ENCODE measurements at regions of chr9 and their contacts with region 1.

Region 1: GRCh38 chr9:120792898-120793765 is at the start of gene FBXW2:
- DNase-seq: peak; percentile 87
- ATAC-seq: peak; percentile 98
- H3K4me3 ChIP-seq: peak within 1 kb of the TSS; percentile 81 to 87 (median 84)
- H3K27ac ChIP-seq: peak within 1 kb of the TSS; percentile 90
- H3K4me1 ChIP-seq: peaks cover 53% of the 10 kb centered on the region
- H3K27me3 ChIP-seq: no peaks in the 10 kb centered on the region; a peak in 1 of 5 replicates
- CTCF ChIP-seq: peak; percentile 23; the same call in 1 of the 2 replicates
- EP300 ChIP-seq: no peak
- POLR2A ChIP-seq: peak; percentile 95 to 97
- RAD21 ChIP-seq: peak; percentile 63
- total RNA-seq, gene FBXW2: 43.1 and 55.2 TPM in 2 replicates

Region 2: GRCh38 chr9:120842690-120843499 is 49.8 kb after region 1 on chr9 and contains the start of gene PSMD5:
- CTCF ChIA-PET with region 1: no interaction called
- POLR2A ChIA-PET with region 1: interaction called, 12 read pairs
- in situ Hi-C with region 1: no loop called
- intact Hi-C with region 1: no loop called
- DNase-seq: peak; percentile 94
- ATAC-seq: peak; percentile 96
- H3K4me3 ChIP-seq: peak within 1 kb of the TSS; percentile 73 to 91 (median 87)
- H3K27ac ChIP-seq: peak within 1 kb of the TSS; percentile 82
- H3K4me1 ChIP-seq: peaks cover 30% of the 10 kb centered on the region
- H3K27me3 ChIP-seq: peaks cover 0 to 3% of the 10 kb centered on the region in 2 experiments; a peak in 1 of 5 replicates
- CTCF ChIP-seq: peak; percentile 48
- EP300 ChIP-seq: no peak
- POLR2A ChIP-seq: peak; percentile 86 to 89
- RAD21 ChIP-seq: peak; percentile 8; the same call in 1 of the 2 replicates
- total RNA-seq, gene PSMD5: 18.1 and 32.6 TPM in 2 replicates

Measured in HepG2 (cell line).